ENCODE measurements at regions of chr4 and their contacts with region 1.

Region 1: DNA sequence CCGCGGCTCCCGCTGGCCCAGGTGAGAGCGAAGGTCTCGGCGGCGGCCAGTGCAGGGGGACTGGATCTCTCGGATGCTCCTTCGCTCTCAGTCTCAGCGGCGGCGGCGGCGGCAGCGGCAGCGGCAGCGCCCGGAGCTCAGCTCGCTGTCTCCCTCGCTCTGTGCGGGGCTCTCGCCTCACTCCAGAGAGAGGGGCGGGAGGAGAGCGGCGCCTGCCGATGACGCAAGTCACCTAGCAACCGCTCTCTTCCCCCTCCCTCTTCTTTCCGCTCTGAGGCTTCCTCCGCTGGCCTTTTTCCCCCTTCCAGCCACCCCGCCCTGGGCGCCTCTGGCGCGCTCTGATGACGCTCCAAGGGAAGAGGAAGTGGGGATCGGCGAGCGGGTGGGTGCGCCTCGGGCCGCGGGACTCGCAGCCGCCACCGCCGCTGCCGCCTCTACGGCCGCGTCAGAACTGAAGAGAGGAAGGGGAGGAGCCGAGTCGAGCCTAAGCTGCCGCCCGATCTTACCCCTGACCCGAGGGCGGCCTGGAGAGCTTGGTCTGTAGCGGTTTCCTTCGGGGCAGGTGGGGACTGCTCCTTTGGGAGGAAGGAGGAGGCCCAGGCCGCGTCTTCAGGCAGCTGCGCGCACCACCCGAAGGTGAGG is at the start of gene FBXW7:
- DNase-seq: peak; percentile 99 to 100 (median 99)
- ATAC-seq: peak; percentile 96 to 97 (median 97)
- H3K4me3 ChIP-seq: peak within 1 kb of the TSS; percentile 63 to 100 (median 90)
- H3K27ac ChIP-seq: peak within 1 kb of the TSS; percentile 83 to 95 (median 90)
- H3K4me1 ChIP-seq: peaks cover 4 to 60% (median 42%) of the 10 kb centered on the region in 12 donors
- H3K27me3 ChIP-seq: no peaks in the 10 kb centered on the region
- CTCF ChIP-seq: no peak
- POLR2A ChIP-seq: peak in 1 of 2 donors; percentile 90
- total RNA-seq, gene FBXW7: 37.2 to 74.1 (median 65.6) TPM

Region 2: GRCh38 chr4:152500800-152501434 is 35.1 kb before region 1 on chr4:
- intact Hi-C with region 1: loop called in 1 of 10 experiments (anchors 5 kb)
- DNase-seq: peak in 2 of 5 donors; percentile 55 to 56
- ATAC-seq: peak in 3 of 4 donors; percentile 63 to 86 (median 72)
- H3K4me3 ChIP-seq: no peak overlapping the region
- H3K27ac ChIP-seq: no peak overlapping the region
- H3K4me1 ChIP-seq: peaks cover 0 to 7% (median 0%) of the 10 kb centered on the region in 12 donors
- H3K27me3 ChIP-seq: no peaks in the 10 kb centered on the region
- CTCF ChIP-seq: peak; percentile 66 to 92 (median 86)
- POLR2A ChIP-seq: no peak

Region 3: GRCh38 chr4:152512483-152512882 is 23.5 kb before region 1 on chr4:
- intact Hi-C with region 1: loop called in 1 of 10 experiments (anchors 2 kb)
- DNase-seq: no peak
- ATAC-seq: peak in 3 of 4 donors; percentile 42 to 88 (median 42)
- H3K4me3 ChIP-seq: no peak overlapping the region
- H3K27ac ChIP-seq: peak overlapping the region in 6 of 12 donors; percentile 0 to 44 (median 20)
- H3K4me1 ChIP-seq: peaks cover 0 to 33% (median 6%) of the 10 kb centered on the region in 12 donors
- H3K27me3 ChIP-seq: no peaks in the 10 kb centered on the region
- CTCF ChIP-seq: no peak
- POLR2A ChIP-seq: no peak

Region 4: GRCh38 chr4:152634110-152634760 is 98.2 kb after region 1 on chr4:
- intact Hi-C with region 1: loop called in 1 of 10 experiments (anchors 10 kb)
- DNase-seq: no peak
- ATAC-seq: no peak
- H3K4me3 ChIP-seq: no peak overlapping the region
- H3K27ac ChIP-seq: no peak overlapping the region
- H3K4me1 ChIP-seq: peaks cover 0 to 15% (median 0%) of the 10 kb centered on the region in 12 donors
- H3K27me3 ChIP-seq: no peaks in the 10 kb centered on the region
- CTCF ChIP-seq: no peak
- POLR2A ChIP-seq: no peak

Region 5: GRCh38 chr4:152679414-152680281 is 143.6 kb after region 1 on chr4 and contains the start of gene TMEM154:
- intact Hi-C with region 1: loop called in 1 of 10 experiments (anchors 10 kb)
- DNase-seq: peak; percentile 53 to 83 (median 59)
- ATAC-seq: peak; percentile 74 to 86 (median 82)
- H3K4me3 ChIP-seq: peak within 1 kb of the TSS; percentile 17 to 65 (median 54)
- H3K27ac ChIP-seq: peak within 1 kb of the TSS in 11 of 12 donors; percentile 5 to 80 (median 50)
- H3K4me1 ChIP-seq: peaks cover 0 to 23% (median 8%) of the 10 kb centered on the region in 12 donors
- H3K27me3 ChIP-seq: no peaks in the 10 kb centered on the region
- CTCF ChIP-seq: no peak
- POLR2A ChIP-seq: peak in 1 of 2 donors; percentile 48
- total RNA-seq, gene TMEM154: 1.2 to 8.0 (median 1.8) TPM